ENCODE measurements at regions of chr4 and their contacts with region 1.

Region 1: DNA sequence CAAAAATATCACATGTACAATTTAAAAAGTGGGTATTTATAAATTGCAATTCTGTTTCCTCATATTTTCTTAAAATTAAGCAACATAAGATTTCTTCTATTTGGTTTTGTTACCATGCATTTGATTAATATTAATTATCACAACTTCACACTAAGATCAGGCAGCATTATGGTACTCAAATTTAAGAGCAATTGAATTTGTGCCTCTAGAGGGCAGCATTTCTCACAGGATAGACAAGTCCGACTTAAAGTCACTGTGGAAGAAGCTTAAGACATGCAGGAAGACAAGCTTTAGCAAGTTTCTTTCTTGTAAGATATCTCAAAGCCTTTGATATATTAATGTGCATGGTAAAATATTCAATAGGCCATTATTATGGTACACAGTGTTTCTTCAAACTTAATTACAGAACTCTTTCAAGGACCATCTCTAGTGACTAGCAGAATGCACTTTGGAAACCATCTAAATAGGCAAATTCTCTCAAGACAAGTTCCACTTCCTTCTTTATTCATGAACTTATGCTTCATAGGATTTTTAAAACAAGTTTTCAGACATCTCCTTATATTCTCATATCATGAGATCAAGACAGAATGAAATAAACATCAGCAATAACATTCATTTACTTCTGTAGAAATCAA is 35.0 kb downstream of the FBXW7 start:
- DNase-seq: peak; percentile 31 to 37
- ATAC-seq: peak; percentile 77

Region 2: DNA sequence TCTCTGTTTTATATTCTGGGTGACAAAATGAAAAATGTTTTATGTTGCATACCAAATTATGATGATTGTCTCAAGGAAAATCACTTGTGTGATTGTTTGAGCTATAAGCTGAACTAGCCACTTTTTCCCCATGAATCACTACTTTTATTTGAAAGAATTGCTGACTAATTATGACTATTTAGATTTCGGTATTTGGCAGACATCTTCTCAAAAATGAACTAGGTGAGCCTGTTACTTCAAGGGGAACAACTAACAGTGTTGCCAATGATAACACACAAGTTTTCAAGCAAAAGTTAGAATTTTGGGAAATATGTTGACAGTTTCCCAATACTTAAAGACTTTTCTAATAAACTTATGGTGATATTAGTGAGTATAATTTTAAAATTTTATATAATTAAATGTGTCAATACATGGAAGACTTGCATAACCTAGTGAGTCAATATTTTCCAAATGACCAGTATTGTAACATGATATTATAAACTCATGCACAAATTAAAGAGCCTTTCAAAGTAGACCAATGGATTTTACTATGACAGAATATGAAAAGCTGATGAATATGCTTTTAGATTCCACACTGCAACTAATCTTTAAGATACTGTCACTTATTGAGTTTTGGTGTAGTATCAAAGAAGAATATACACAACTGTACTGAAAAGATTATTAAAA is 552.4 kb before region 1 on chr4:
- intact Hi-C with region 1: no loop called
- DNase-seq: no peak
- ATAC-seq: no peak

Region 3: DNA sequence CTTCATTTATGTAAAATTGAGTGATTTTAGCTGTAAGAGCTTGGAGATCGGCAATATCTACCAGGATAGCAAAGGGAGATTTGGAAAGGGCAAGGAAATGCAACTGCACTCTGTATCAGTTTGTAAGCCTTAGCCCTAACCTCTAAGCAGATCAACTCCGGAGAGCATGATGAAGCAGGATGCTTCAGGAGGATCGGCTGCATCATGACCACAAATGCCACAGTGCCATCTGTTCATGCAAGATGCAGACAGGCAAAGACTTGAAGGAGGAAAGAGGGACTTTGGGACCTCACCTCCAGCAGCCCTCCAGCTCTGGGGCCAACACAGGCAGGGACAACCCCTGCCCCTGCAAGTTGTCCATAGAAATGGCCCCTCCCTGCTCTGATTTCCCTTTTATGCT is 362.5 kb before region 1 on chr4:
- intact Hi-C with region 1: no loop called
- DNase-seq: no peak
- ATAC-seq: no peak

Region 4: GRCh38 chr4:152640058-152640833 is 139.3 kb after region 1 on chr4:
- intact Hi-C with region 1: loop called in 1 of 2 experiments (anchors 5 kb)
- DNase-seq: no peak
- ATAC-seq: peak; percentile 59